Upper lobe of right lung (tissue), 1 donor: ENCODE measurements at regions of chr5 and their contacts with region 1.

Region 1: GRCh38 chr5:132489871-132490485 is 595 bp downstream of the IRF1 start:
- DNase-seq: peak; percentile 86
- ATAC-seq: peak; percentile 53
- H3K4me3 ChIP-seq: peak overlapping the region; percentile 94
- H3K27ac ChIP-seq: peak overlapping the region; percentile 98
- H3K4me1 ChIP-seq: peaks cover 67% of the 10 kb centered on the region
- H3K27me3 ChIP-seq: no peaks in the 10 kb centered on the region
- CTCF ChIP-seq: peak; percentile 23

Region 2: GRCh38 chr5:132386644-132387286 is 103.2 kb before region 1 on chr5:
- intact Hi-C with region 1: no loop called
- DNase-seq: peak; percentile 84
- ATAC-seq: peak; percentile 89
- H3K4me3 ChIP-seq: no peak overlapping the region
- H3K27ac ChIP-seq: peak overlapping the region; percentile 88
- H3K4me1 ChIP-seq: peaks cover 48% of the 10 kb centered on the region
- H3K27me3 ChIP-seq: no peaks in the 10 kb centered on the region
- CTCF ChIP-seq: peak; percentile 86

Region 3: DNA sequence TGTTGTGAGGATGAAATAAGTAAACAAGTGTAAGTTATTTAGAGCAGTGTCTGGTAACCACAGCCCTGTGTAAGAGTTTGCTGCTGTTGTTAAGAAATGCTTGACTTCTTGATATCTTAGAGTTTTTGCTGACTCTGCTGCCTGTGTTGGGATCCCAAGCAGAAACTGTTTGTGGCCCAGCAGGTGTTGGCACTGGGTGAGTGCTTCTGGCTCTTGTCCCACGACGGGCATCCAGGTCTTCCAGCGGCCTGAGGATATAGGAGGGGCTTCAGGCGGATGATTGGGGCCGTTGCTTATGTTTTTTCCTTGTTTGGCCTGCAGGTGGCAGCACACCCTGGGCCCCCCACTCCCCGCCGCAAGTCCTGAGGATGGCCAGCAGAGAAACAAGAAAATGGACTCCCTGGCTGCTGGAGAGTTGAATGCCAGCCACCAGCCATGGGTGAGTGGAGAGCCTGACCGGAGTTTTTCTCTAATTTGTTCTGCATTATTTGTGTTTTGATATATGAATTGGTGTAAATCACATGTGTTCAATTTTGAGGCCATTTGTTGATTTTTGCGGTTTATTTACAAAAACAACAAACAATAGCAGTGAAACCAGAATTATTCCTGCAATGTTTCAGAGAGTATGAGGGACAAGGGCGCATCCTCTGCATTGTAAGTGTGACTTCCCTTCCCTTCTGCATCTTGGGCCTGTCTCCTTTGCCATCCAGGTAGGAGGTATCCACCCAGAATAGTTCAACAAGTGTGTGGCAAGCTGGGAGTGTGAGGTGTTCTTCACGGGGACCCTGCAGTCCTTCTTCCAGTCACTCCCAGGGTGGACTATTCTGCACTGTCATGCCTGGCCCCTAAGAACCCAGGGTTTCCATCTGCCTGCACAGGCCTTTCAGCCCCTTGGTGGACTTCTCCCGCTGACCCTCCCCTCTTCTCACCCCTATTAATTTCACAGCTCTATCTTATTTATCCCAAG is 70.2 kb before region 1 on chr5:
- intact Hi-C with region 1: loop called (anchors 5 kb)
- DNase-seq: peak; percentile 83
- ATAC-seq: peak; percentile 86
- H3K4me3 ChIP-seq: no peak overlapping the region
- H3K27ac ChIP-seq: peak overlapping the region; percentile 83
- H3K4me1 ChIP-seq: peaks cover 93% of the 10 kb centered on the region
- H3K27me3 ChIP-seq: no peaks in the 10 kb centered on the region
- CTCF ChIP-seq: peak; percentile 88